ENCODE measurements at regions of chr5 and their contacts with region 1.

Region 1: DNA sequence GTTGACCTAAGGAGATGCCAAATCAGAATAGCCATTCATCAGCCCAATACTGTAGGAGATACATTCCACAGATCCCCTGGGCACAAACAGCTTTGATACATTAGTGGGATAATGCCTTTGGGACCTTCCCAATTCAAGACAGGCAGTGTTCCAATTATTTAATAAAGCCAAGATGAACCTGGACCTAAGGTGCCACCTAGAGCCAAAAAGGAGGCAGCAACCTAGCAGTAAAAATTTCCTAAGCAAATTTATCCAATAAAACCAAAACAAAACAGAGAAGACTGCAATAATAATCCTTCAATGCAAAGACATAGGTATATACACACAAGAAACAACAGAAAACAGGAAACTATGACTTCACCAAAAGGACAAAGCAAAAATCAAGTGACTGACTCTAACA is 253.0 kb downstream of the HINT1 start:
- DNase-seq: peak; percentile 36
- H3K27ac ChIP-seq: no peak overlapping the region
- CTCF ChIP-seq: no peak

Region 2: DNA sequence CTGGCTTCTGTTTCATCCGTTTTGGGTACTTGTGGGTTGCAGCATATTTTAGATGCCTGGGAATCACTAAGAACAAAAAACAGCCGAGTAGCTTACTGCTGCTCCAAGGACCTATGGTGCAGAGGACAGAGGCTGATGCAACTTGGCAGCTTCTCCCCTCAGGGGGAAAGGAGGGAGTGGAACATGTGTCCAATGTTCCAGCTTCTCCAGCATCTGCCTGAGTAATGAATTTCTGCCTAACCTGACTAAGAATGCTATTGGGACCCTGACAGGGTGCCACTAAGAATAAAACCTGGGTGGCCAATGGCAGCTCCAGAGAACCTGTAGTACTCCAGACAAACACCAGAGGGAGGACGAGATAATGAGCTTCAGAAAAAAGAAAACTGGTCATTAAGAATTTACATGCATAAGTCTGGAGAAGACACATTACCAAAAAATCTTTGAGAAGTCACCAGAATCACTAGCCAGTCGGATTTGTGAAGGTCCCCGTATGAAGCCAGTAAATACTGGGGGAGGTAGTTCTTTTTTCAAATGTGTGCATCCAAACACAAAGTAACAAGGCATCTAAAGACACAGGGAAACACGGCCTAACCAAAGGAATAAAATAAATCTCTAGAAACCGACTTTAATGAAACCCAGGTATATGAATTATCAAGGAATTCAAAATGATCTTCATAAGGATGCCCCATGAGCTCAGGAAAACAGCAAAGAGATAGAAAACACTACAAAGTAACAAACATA is 40.6 kb before region 1 on chr5:
- CTCF ChIA-PET with region 1: interaction called, 20 read pairs
- POLR2A ChIA-PET with region 1: no interaction called
- DNase-seq: peak; percentile 35
- H3K27ac ChIP-seq: no peak overlapping the region
- CTCF ChIP-seq: peak; percentile 43

Region 3: GRCh38 chr5:130893006-130893405 is 19.1 kb before region 1 on chr5:
- CTCF ChIA-PET with region 1: no interaction called
- POLR2A ChIA-PET with region 1: no interaction called
- DNase-seq: no peak
- H3K27ac ChIP-seq: no peak overlapping the region
- CTCF ChIP-seq: no peak

Measured in RWPE1 (cell line).